ENCODE measurements at regions of chr7 and their contacts with region 1.

Region 1: DNA sequence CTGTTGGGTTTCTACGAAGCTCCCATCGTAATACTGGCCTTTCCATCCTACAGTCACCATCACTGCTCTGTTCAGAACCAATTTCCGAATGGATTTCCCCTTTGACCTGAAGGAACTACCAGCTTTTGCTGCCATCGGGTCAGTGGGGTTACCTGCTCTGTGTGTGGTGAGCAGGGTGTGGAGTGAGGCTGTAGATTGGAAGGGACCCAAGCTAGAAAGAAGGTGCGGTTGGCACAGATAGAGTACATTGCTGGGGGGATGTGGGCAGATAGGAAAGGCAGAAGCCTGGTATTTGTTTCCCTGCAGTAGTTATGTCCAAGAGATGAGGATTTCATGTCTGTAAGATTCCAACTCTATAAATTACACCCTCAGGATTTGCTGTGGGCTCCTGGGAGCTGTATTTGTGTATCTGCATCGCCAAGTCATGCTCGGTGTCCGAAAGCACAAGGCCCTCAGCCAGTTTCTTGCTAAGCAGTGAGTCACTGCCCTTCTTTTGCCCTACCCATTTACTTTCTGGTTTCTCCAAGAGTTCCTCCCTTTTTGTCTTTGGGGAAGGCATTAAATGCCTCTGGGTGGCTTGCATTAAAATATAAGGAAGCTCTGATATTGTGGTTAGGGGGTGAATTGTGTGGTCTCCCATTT is 15.4 kb downstream of the CLCN1 start:
- DNase-seq: no peak
- H3K4me3 ChIP-seq: no peak overlapping the region
- H3K27ac ChIP-seq: peak overlapping the region in 1 of 2 experiments; percentile 34; a peak in 1 of 4 replicates
- H3K4me1 ChIP-seq: peaks cover 0 to 3% of the 10 kb centered on the region in 2 experiments; a peak in 1 of 4 replicates
- H3K27me3 ChIP-seq: no peaks in the 10 kb centered on the region
- CTCF ChIP-seq: no peak
- EP300 ChIP-seq: no peak
- RAD21 ChIP-seq: no peak

Region 2: DNA sequence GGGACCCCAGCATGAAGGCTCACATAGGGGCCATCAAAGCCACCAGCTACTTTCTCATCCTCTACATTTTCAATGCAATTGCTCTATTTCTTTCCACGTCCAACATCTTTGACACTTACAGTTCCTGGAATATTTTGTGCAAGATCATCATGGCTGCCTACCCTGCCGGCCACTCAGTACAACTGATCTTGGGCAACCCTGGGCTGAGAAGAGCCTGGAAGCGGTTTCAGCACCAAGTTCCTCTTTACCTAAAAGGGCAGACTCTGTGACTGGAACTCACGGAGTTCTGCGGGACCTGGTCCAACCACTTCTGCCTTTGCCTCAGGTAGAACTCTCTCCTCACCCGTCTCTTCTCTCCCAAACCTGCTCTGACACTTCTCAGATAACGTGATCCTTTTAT is 108.5 kb before region 1 on chr7:
- CTCF ChIA-PET with region 1: no interaction called
- POLR2A ChIA-PET with region 1: no interaction called
- DNase-seq: no peak
- H3K4me3 ChIP-seq: no peak overlapping the region
- H3K27ac ChIP-seq: no peak overlapping the region
- H3K4me1 ChIP-seq: no peaks in the 10 kb centered on the region
- H3K27me3 ChIP-seq: peaks cover 40% of the 10 kb centered on the region; the same call in 1 of the 2 replicates
- CTCF ChIP-seq: no peak
- EP300 ChIP-seq: no peak
- RAD21 ChIP-seq: no peak

Region 3: DNA sequence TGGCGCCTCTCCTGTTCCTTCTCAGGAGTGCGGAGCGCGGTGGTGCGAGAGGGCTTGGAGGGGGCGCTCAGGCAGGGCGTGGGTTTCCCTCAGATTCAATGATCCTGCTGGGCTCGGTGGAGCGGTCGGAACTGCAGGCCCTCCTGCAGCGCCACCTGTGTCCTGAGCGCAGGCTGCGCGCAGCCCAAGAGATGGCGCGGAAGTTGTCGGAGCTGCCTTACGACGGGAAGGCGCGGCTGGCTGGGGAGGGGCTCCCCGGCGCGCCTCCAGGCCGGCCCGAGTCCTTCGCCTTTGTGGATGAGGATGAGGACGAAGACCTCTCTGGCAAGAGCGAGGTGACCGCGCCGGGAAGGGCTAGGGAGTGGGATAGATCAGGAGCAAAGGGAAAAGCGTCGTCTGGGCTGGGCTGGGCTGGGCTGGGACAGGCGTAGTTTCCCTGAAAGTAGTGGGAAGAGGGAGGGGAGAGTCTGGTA is 14.2 kb after region 1 on chr7:
- CTCF ChIA-PET with region 1: interaction called, 10 read pairs
- POLR2A ChIA-PET with region 1: interaction called, 3 read pairs
- DNase-seq: peak; percentile 71
- H3K4me3 ChIP-seq: peak overlapping the region; percentile 9 to 26; a peak in 2 of 4 replicates
- H3K27ac ChIP-seq: no peak overlapping the region
- H3K4me1 ChIP-seq: no peaks in the 10 kb centered on the region; a peak in 1 of 4 replicates
- H3K27me3 ChIP-seq: no peaks in the 10 kb centered on the region
- CTCF ChIP-seq: peak; percentile 61
- EP300 ChIP-seq: no peak
- RAD21 ChIP-seq: peak; percentile 47

Measured in SK-N-SH (cell line).